Activated CD4-positive, alpha-beta T cell treated with anti-CD3 and anti-CD28 coated beads for 36 hours (primary cell): ENCODE measurements at regions of chr11 and their contacts with region 1.

Region 1: GRCh38 chr11:36265793-36266628 is 23.2 kb downstream of the COMMD9 start:
- DNase-seq: peak; percentile 80
- ATAC-seq: peak; percentile 77
- H3K4me3 Mint-ChIP-seq: no peak overlapping the region
- H3K27ac Mint-ChIP-seq: no peak overlapping the region
- H3K4me1 Mint-ChIP-seq: no peaks in the 10 kb centered on the region
- H3K27me3 Mint-ChIP-seq: peaks cover 8% of the 10 kb centered on the region

Region 2: GRCh38 chr11:35485656-35486322 is 780.2 kb before region 1 on chr11:
- CTCF ChIA-PET with region 1: interaction called, 3 read pairs
- POLR2A ChIA-PET with region 1: no interaction called
- intact Hi-C with region 1: loop called in 1 of 2 experiments (anchors 5 kb)
- DNase-seq: peak; percentile 85
- ATAC-seq: peak; percentile 95
- H3K4me3 Mint-ChIP-seq: no peak overlapping the region
- H3K27ac Mint-ChIP-seq: no peak overlapping the region
- H3K4me1 Mint-ChIP-seq: no peaks in the 10 kb centered on the region
- H3K27me3 Mint-ChIP-seq: peaks cover 37% of the 10 kb centered on the region

Region 3: DNA sequence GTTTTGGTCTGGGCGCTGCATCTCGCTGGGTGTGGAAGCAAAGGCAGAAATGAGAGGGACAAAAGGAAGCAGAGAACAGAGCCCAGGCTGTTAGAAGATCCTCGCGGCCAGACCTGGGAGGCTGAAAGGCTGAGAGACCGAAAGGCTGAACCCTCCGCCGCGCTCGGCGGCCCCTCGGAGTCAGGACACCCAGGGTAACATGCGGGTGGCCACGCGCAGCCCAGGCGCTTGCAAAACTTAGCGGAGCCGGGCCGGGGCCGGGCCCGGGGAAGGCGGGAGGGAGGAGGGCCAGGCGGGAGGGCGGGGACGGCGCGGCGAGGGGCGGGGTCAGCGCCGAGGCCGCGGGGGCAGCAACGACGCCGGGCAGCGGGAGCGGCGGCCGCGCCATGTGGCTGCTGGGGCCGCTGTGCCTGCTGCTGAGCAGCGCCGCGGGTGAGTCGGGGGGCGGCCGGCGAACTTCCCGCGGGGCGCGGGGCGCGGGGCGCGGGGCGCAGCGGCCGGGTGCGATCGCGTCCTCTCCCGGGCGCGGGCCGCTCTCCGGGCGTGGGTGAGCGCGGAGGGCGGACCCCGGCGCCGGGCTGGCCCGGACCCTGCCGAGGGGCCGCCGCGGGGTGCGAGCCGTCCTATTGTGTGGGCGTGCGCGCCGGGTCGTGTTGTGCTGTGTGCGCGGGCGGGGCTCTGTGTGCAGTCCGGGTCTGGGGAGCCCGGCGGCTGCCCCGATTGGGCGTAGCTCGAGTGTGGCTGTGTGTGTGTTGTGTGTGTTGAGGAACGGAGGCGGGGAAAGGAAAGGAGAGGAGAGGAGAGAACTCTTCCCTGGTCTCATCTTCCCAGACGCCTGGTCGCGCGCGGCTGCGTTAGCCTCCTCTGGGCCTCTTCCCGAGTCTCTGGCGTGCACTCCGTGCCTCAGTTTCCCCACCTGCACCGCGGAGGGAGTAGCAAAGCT is 322.0 kb before region 1 on chr11 and contains the start of gene LDLRAD3:
- CTCF ChIA-PET with region 1: no interaction called
- POLR2A ChIA-PET with region 1: no interaction called
- intact Hi-C with region 1: loop called in 1 of 2 experiments (anchors 10 kb)
- DNase-seq: peak; percentile 67
- ATAC-seq: peak; percentile 87
- H3K4me3 Mint-ChIP-seq: peak within 1 kb of the TSS; percentile 68
- H3K27ac Mint-ChIP-seq: no peak within 1 kb of the TSS
- H3K4me1 Mint-ChIP-seq: peaks cover 3% of the 10 kb centered on the region
- H3K27me3 Mint-ChIP-seq: peaks cover 46% of the 10 kb centered on the region
- total RNA-seq, gene LDLRAD3: 0.46 to 0.47 TPM

Region 4: DNA sequence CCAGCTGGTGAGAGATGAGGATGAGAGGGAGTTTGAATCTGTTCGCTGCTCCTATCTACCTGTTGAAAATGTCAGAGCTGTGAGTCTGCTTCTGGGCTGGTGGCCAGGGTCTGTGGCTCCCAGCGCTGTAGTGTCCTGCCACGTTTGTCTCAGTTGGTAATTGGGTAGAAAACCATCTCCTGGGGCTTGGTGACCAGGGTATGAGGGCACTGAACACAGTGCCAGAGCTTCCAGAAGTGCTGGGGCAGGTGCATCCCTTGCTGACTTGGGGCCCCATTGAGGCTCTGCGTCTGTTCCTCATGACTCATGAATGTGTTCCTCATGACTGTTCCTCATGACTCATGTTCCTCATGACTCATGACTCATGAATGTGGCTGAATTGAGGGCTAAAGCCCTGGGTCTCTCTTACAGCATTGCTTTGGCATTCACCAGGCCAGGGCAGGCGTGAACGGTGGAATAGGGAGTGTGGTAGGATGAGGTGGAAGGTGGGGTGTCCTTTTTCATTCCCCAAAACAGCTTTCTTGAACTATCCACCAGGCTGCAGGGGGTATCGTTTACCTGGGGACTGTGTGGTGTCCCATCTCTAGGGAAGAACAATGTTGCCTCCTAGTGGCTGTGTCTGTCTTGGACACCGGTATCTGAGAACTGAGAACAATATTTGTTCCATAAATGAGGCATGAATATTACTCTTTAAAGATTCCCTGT is 116.3 kb before region 1 on chr11:
- CTCF ChIA-PET with region 1: no interaction called
- POLR2A ChIA-PET with region 1: no interaction called
- intact Hi-C with region 1: loop called in 1 of 2 experiments (anchors 5 kb)
- DNase-seq: peak; percentile 72
- ATAC-seq: peak; percentile 98
- H3K4me3 Mint-ChIP-seq: no peak overlapping the region
- H3K27ac Mint-ChIP-seq: no peak overlapping the region
- H3K4me1 Mint-ChIP-seq: peaks cover 16% of the 10 kb centered on the region
- H3K27me3 Mint-ChIP-seq: peaks cover 13% of the 10 kb centered on the region

Region 5: DNA sequence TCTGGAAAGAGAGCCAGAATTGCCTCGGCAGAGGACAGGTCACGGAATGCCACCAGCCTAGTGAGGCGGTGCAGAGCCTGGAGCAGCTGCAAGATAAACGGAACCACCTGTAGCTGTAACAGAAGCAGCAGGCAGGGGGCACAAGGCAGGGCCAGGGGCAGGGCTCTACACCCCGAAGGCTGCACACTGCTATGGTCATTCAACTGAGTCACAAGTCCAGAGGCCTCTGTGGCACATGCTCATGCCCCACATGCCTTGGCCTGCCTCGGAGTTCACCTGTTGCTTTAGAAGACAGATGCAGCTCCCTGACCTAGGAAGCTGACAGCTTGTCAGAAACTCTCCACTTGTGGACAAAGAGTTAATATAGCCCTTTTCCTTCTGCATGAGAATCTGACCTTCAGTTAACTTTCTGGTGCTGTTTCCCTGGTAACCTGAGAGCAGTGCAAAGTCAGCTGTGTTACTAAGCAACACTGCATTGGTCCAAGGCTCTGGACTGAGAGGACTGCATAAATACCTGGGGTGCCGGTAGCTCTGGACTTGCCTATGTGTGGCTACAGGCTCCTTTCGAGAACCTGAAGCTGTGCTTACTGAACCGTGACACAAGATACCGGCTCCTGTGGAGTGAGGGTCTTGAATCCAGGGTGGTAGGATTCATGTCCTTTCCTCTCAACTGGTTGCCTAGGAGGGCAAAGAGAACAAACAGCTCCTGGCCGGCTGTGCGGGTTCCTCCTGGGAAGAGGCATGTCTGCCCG is 12.7 kb after region 1 on chr11:
- CTCF ChIA-PET with region 1: interaction called, 17 read pairs
- POLR2A ChIA-PET with region 1: no interaction called
- intact Hi-C with region 1: no loop called
- DNase-seq: no peak
- ATAC-seq: no peak
- H3K4me3 Mint-ChIP-seq: no peak overlapping the region
- H3K27ac Mint-ChIP-seq: no peak overlapping the region
- H3K4me1 Mint-ChIP-seq: peaks cover 2% of the 10 kb centered on the region
- H3K27me3 Mint-ChIP-seq: no peaks in the 10 kb centered on the region

Region 6: GRCh38 chr11:36492724-36493304 is 226.8 kb after region 1 on chr11:
- CTCF ChIA-PET with region 1: interaction called, 11 read pairs
- POLR2A ChIA-PET with region 1: no interaction called
- intact Hi-C with region 1: no loop called
- DNase-seq: peak; percentile 41
- ATAC-seq: peak; percentile 74
- H3K4me3 Mint-ChIP-seq: no peak overlapping the region
- H3K27ac Mint-ChIP-seq: peak overlapping the region; percentile 24
- H3K4me1 Mint-ChIP-seq: peaks cover 23% of the 10 kb centered on the region
- H3K27me3 Mint-ChIP-seq: no peaks in the 10 kb centered on the region